ENCODE measurements at regions of chr18 and their contacts with region 1.

Region 1: GRCh38 chr18:3665780-3666525 is 216.0 kb downstream of the TGIF1 start:
- DNase-seq: peak; percentile 62 to 70 (median 68)
- H3K4me3 ChIP-seq: no peak overlapping the region
- H3K4me3 Mint-ChIP-seq: peak overlapping the region in 5 of 8 donors; percentile 22 to 64 (median 38)
- H3K27ac ChIP-seq: no peak overlapping the region
- H3K27ac Mint-ChIP-seq: peak overlapping the region in 1 of 7 donors; percentile 35
- H3K4me1 ChIP-seq: peaks cover 5% of the 10 kb centered on the region
- H3K4me1 Mint-ChIP-seq: peaks cover 2 to 9% (median 5%) of the 10 kb centered on the region in 4 donors
- H3K27me3 ChIP-seq: no peaks in the 10 kb centered on the region
- H3K27me3 Mint-ChIP-seq: peaks cover 2 to 3% of the 10 kb centered on the region in 2 donors

Region 2: GRCh38 chr18:3281456-3282400 is 384.2 kb before region 1 on chr18:
- CTCF ChIA-PET with region 1: interaction called, 317 read pairs
- POLR2A ChIA-PET with region 1: interaction called, 5 read pairs
- intact Hi-C with region 1: loop called (anchors 1 kb)
- DNase-seq: peak in 4 of 5 donors; percentile 69 to 73 (median 72)
- H3K4me3 ChIP-seq: no peak overlapping the region
- H3K4me3 Mint-ChIP-seq: no peak overlapping the region
- H3K27ac ChIP-seq: no peak overlapping the region
- H3K27ac Mint-ChIP-seq: no peak overlapping the region
- H3K4me1 ChIP-seq: no peaks in the 10 kb centered on the region
- H3K4me1 Mint-ChIP-seq: peaks cover 0 to 4% (median 1%) of the 10 kb centered on the region in 4 donors
- H3K27me3 ChIP-seq: no peaks in the 10 kb centered on the region
- H3K27me3 Mint-ChIP-seq: no peaks in the 10 kb centered on the region

Region 3: GRCh38 chr18:3321133-3321812 is 344.7 kb before region 1 on chr18:
- CTCF ChIA-PET with region 1: interaction called, 11 read pairs
- POLR2A ChIA-PET with region 1: no interaction called
- intact Hi-C with region 1: no loop called
- DNase-seq: no peak
- H3K4me3 ChIP-seq: no peak overlapping the region
- H3K4me3 Mint-ChIP-seq: no peak overlapping the region
- H3K27ac ChIP-seq: no peak overlapping the region
- H3K27ac Mint-ChIP-seq: peak overlapping the region in 1 of 7 donors; percentile 7
- H3K4me1 ChIP-seq: no peaks in the 10 kb centered on the region
- H3K4me1 Mint-ChIP-seq: peaks cover 0 to 2% (median 0%) of the 10 kb centered on the region in 4 donors
- H3K27me3 ChIP-seq: no peaks in the 10 kb centered on the region
- H3K27me3 Mint-ChIP-seq: peaks cover 6% of the 10 kb centered on the region in 2 donors

Region 4: DNA sequence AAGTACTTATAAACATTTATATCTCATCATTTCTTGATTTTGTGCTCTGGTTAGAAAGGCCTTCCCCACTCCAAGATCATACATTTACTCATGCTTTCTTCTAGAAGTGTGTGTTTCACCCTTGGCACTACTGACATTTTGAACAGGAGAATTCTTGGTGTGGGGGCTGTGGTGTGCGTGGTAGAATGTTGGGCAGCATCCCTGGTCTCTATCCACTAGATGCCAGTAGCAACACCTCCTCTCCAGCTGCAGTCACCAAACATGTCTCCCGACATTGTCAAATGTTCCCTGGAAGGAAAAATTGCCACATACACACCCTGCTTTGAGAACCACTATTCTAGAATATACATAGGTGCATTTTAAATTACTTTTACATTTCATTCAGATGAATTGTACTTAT is 224.7 kb before region 1 on chr18:
- CTCF ChIA-PET with region 1: interaction called, 34 read pairs
- POLR2A ChIA-PET with region 1: no interaction called
- intact Hi-C with region 1: no loop called
- DNase-seq: peak in 3 of 5 donors; percentile 20 to 30 (median 21)
- H3K4me3 ChIP-seq: no peak overlapping the region
- H3K4me3 Mint-ChIP-seq: no peak overlapping the region
- H3K27ac ChIP-seq: no peak overlapping the region
- H3K27ac Mint-ChIP-seq: no peak overlapping the region
- H3K4me1 ChIP-seq: no peaks in the 10 kb centered on the region
- H3K4me1 Mint-ChIP-seq: no peaks in the 10 kb centered on the region
- H3K27me3 ChIP-seq: no peaks in the 10 kb centered on the region
- H3K27me3 Mint-ChIP-seq: peaks cover 0 to 2% of the 10 kb centered on the region in 2 donors

Region 5: GRCh38 chr18:3481696-3482210 is 184.2 kb before region 1 on chr18:
- CTCF ChIA-PET with region 1: interaction called, 14 read pairs
- POLR2A ChIA-PET with region 1: no interaction called
- intact Hi-C with region 1: no loop called
- DNase-seq: peak in 3 of 5 donors; percentile 13 to 30 (median 19)
- H3K4me3 ChIP-seq: no peak overlapping the region
- H3K4me3 Mint-ChIP-seq: no peak overlapping the region
- H3K27ac ChIP-seq: no peak overlapping the region
- H3K27ac Mint-ChIP-seq: no peak overlapping the region
- H3K4me1 ChIP-seq: no peaks in the 10 kb centered on the region
- H3K4me1 Mint-ChIP-seq: peaks cover 0 to 1% (median 0%) of the 10 kb centered on the region in 4 donors
- H3K27me3 ChIP-seq: no peaks in the 10 kb centered on the region
- H3K27me3 Mint-ChIP-seq: peaks cover 0 to 2% of the 10 kb centered on the region in 2 donors

Region 6: DNA sequence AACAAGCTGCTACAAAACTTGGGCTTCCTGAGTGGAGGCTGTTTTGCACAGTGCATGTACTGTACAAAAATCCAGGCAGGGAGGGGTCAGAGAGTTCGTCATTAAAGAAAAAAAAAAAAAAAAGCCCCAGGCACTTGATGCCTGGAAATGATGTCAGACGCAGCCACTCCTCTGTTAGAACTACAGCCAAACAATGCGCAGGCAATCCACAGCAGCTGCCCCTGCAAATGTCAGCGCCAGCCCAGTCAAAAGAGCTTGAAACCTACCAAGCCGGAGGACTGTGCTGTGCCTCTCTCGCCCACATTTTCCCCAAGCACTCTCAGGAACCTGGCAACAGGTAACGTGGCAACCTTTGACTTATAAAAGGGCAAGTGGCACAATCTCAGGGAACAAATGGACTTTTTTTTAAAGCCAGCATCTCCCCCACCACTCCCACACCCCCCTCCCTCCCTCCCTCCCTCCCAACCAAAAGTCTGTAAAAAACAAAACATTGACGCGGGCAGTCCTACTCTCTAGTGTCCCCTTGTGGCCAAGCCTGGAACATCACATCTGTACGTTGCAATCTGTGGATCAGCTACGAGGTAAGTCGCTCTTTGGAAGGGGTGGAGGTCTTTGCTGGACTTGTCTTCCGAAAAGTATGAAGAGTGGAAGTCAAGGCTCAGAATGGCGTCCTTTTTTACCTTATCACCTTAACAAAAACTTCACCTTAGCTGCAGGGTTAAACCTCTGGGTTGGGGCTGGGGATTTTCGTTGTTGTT is 71.9 kb before region 1 on chr18:
- CTCF ChIA-PET with region 1: interaction called, 100 read pairs
- POLR2A ChIA-PET with region 1: interaction called, 33 read pairs
- intact Hi-C with region 1: loop called (anchors 1 kb)
- DNase-seq: peak; percentile 93 to 96 (median 95)
- H3K4me3 ChIP-seq: peak overlapping the region; percentile 68 to 72
- H3K4me3 Mint-ChIP-seq: peak overlapping the region; percentile 88 to 95 (median 91)
- H3K27ac ChIP-seq: peak overlapping the region; percentile 91
- H3K27ac Mint-ChIP-seq: peak overlapping the region; percentile 98 to 100 (median 99)
- H3K4me1 ChIP-seq: peaks cover 53% of the 10 kb centered on the region
- H3K4me1 Mint-ChIP-seq: peaks cover 37 to 66% (median 49%) of the 10 kb centered on the region in 4 donors
- H3K27me3 ChIP-seq: no peaks in the 10 kb centered on the region
- H3K27me3 Mint-ChIP-seq: no peaks in the 10 kb centered on the region

Region 7: DNA sequence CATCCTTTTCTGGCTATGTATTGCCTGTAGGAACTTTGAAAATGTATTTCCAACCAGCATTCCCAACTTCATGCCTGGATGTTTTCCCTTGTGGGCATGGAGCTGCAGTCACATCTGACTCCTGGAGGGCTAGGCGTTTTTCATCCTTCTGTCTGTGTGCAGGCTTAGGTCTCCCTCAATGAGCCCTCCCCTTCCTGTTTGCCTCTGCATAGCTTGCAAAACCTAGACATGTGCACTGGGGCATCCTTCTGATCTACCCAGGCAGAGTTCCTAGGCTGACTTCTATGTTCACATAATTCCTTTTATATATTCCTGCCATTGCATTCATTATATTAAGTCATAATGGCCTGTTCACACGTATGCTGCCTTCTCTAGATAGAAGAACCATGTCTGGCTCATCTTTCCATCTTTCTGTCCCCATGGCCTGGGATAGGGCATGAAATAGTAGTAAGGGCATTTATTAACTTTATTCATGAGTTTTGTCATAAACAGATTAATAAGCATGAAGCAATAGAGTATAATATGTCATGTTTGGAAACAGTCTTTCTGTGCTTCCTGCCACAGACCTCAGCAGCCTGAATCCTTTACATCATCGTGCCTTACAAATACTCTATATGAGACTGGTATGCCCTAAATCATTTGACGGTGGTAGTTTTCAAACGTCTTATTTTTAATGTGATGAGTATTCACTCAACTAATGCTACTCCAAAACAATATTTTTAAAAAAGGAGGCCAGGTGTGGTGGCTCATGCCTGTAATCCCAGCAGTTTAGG is 20.4 kb before region 1 on chr18:
- CTCF ChIA-PET with region 1: interaction called, 15 read pairs
- POLR2A ChIA-PET with region 1: no interaction called
- intact Hi-C with region 1: no loop called
- DNase-seq: no peak
- H3K4me3 ChIP-seq: no peak overlapping the region
- H3K4me3 Mint-ChIP-seq: no peak overlapping the region
- H3K27ac ChIP-seq: no peak overlapping the region
- H3K27ac Mint-ChIP-seq: peak overlapping the region in 1 of 7 donors; percentile 28
- H3K4me1 ChIP-seq: no peaks in the 10 kb centered on the region
- H3K4me1 Mint-ChIP-seq: peaks cover 5 to 6% (median 6%) of the 10 kb centered on the region in 4 donors
- H3K27me3 ChIP-seq: no peaks in the 10 kb centered on the region
- H3K27me3 Mint-ChIP-seq: peaks cover 0 to 2% of the 10 kb centered on the region in 2 donors